Body of pancreas (tissue), 4 donors: ENCODE measurements at regions of chr1 and their contacts with region 1.

Region 1: GRCh38 chr1:39973503-39974135 is 18.7 kb downstream of the MFSD2A start:
- DNase-seq: peak; percentile 82 to 85 (median 82)
- ATAC-seq: peak; percentile 75
- H3K4me3 ChIP-seq: no peak overlapping the region
- H3K27ac ChIP-seq: no peak overlapping the region
- H3K4me1 ChIP-seq: peaks cover 5% of the 10 kb centered on the region
- H3K27me3 ChIP-seq: no peaks in the 10 kb centered on the region
- CTCF ChIP-seq: peak; percentile 89 to 97 (median 95)
- POLR2A ChIP-seq: no peak

Region 2: DNA sequence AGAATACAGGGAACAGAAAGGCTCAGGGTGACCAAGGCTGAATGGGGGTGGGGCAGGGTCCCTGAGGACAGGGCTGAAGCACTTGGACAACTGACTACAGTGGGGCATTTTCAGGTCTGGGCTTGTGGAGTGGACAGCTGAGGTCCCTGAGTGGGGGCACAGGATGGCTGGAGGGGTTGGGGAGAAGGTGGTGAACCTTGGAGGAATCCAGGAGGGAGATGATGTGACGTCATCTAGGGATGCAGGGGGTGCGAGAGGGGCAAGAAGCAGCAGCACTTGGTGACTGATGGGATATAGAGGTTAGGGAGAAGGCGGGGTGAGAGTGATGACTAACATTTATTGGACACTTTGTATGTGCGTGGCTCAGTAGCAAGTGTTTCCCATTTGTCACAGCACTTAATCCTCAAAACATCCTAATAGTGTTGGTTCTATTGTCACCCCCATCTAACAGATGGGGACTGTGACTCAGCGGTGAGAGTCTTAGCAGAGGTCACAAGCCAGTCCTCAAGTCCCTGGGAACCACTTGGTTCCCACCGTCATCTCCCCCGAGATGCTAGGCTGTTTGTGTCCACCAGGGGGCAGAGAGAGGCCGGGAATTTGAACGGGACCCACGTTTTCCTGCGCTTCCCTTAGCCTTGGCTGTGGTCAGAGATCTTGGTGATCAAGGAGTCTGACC is 157.1 kb before region 1 on chr1:
- intact Hi-C with region 1: loop called (anchors 5 kb)
- DNase-seq: peak; percentile 70 to 83 (median 80)
- ATAC-seq: peak; percentile 88
- H3K4me3 ChIP-seq: no peak overlapping the region
- H3K27ac ChIP-seq: no peak overlapping the region
- H3K4me1 ChIP-seq: peaks cover 19% of the 10 kb centered on the region
- H3K27me3 ChIP-seq: no peaks in the 10 kb centered on the region
- CTCF ChIP-seq: peak; percentile 66 to 96 (median 94)
- POLR2A ChIP-seq: no peak

Region 3: GRCh38 chr1:39919545-39919944 is 54.1 kb before region 1 on chr1:
- intact Hi-C with region 1: loop called (anchors 5 kb)
- DNase-seq: peak; percentile 37 to 66 (median 48)
- ATAC-seq: peak; percentile 96
- H3K4me3 ChIP-seq: no peak overlapping the region
- H3K27ac ChIP-seq: no peak overlapping the region
- H3K4me1 ChIP-seq: no peaks in the 10 kb centered on the region
- H3K27me3 ChIP-seq: no peaks in the 10 kb centered on the region
- CTCF ChIP-seq: peak; percentile 46 to 86 (median 77)
- POLR2A ChIP-seq: no peak